Motor neuron (in vitro differentiated cells): ENCODE measurements at regions of chr1 and their contacts with region 1.

Region 1: DNA sequence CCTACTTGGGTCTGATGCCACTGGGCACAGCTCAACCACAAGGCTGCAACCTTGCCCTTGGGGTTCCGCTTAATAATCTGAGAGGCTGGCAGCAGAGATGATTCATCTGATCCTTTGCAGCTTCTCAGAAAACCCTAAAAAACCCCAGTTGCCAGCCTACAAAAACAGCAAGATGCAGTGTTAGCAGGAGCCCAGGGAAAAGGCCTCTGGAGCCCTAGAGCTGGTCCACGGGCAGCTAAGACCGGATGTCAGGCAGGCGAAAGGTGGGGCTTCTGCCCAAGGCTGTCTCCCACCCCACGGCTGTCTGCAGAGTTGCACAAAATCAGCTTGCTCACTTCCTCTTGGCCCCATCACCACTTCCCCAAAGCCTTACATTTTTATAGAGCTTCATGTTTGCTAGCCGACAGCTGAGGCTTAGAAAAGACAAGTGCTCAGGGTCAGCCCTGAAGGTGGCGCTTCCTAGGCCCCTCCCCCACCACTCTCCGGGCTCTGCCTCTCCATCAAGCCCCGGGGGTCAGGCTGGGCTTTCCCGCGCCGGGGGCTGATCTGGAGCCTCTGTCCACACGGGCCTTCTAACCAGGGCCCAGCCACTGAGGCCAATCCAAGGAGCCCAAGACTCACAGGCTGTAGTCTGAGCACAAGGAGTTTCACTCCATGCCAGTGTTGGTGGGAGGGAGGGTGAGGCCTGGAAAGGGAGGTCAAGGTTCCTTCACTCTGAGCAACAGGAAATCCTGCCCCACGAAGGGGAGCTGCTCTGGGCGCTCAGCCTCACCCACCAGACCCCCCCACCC is 4.2 kb upstream of the ADORA3 start:
- ATAC-seq: peak; percentile 71 to 88 (median 84)
- H3K4me3 ChIP-seq: peak overlapping the region; percentile 13 to 26 (median 18)
- H3K27ac ChIP-seq: peak overlapping the region; percentile 24 to 79
- H3K4me1 ChIP-seq: peaks cover 11 to 15% of the 10 kb centered on the region in 2 donors

Region 2: GRCh38 chr1:111656086-111657017 is 148.7 kb after region 1 on chr1:
- in situ Hi-C with region 1: loop called in 3 of 9 experiments (anchors 10 to 25 kb)
- ATAC-seq: peak in 2 of 8 experiments; percentile 25 to 47
- H3K4me3 ChIP-seq: no peak overlapping the region
- H3K27ac ChIP-seq: no peak overlapping the region
- H3K4me1 ChIP-seq: peaks cover 0 to 3% of the 10 kb centered on the region in 2 donors

Region 3: DNA sequence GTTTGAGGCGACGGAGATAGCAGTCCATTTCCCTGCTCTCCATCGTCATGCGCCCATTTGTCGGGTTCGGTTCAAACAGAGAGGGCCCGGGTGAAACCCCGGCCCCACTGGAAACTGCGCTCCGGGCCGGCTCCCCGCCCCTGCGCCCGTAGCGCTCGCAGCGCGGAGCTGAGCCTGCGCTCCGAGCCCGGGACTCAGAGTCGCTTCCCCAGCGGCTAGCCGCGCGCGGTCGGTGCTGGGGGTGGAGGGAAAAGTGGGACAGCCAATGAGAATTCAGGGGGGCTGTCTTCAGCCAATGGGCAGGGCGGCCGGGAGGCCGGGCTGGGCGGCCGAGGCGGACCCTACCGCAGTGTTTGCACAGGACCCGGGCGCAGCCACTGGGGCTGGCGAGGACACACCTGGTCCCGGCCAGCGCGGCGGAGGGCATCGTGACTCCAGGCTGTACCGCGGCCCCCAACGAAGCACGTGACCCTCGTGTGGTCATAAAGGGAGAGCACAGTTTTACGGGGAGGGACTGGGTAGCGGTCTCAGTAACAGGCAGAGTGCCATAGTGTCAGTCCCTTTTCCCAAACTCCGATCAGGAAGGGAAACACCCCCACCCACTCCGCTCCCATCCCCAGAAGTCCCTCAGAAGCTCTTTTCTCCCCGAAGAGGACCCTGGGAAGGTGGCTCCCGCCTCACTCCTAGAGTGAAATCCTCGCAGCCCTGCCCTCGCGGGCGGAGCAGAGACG is 231.8 kb after region 1 on chr1 and contains the start of gene INKA2:
- in situ Hi-C with region 1: loop called in 1 of 9 experiments (anchors 25 kb)
- ATAC-seq: peak; percentile 75 to 91 (median 87)
- H3K4me3 ChIP-seq: peak within 1 kb of the TSS; percentile 46 to 53 (median 46)
- H3K27ac ChIP-seq: peak within 1 kb of the TSS; percentile 78 to 84
- H3K4me1 ChIP-seq: peaks cover 27 to 29% of the 10 kb centered on the region in 2 donors
- total RNA-seq, gene INKA2: 1.3 to 14.3 (median 4.7) TPM

Region 4: DNA sequence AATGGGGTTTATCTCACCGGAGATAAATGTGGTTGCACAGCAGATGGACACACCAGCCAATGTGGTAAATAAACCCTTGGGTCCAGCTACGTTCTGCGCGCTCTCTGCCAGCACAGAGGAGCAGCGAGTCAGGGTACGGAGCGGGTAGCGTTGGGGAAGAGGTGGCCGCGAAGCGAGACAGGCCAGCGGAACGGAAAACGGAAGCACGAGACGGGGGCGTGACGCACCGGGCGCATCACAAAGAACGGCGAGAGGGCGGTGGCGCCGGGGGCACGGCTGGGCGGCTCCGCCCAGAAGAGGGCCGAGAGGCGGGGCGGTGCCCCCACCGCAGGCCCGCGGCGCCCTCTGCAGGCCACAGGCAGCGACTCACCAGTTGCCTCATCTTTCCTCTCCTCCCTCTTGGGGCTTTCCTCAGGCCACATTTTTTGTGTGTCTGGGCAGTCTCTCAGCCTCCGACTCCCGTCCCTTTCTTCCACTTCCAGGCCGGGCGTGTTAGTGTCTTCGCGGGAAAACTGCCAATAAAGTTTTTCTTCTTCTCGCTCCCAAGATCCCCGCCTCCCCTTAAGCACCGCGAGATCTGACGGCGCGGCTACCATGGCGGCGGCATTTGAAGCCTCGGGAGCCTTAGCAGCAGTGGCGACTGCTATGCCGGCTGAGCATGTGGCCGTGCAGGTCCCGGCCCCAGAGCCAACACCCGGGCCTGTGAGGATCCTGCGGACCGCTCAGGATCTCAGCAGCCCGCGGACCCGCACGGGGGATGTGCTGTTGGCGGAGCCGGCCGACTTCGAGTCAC is 247.9 kb after region 1 on chr1 and contains the start of gene DDX20:
- in situ Hi-C with region 1: loop called in 3 of 9 experiments (anchors 25 kb)
- ATAC-seq: peak; percentile 82 to 91 (median 89)
- H3K4me3 ChIP-seq: peak within 1 kb of the TSS; percentile 71 to 95 (median 88)
- H3K27ac ChIP-seq: peak within 1 kb of the TSS; percentile 95 to 96
- H3K4me1 ChIP-seq: peaks cover 15 to 19% of the 10 kb centered on the region in 2 donors
- total RNA-seq, gene DDX20: 8.6 to 26.1 (median 14.9) TPM

Region 5: DNA sequence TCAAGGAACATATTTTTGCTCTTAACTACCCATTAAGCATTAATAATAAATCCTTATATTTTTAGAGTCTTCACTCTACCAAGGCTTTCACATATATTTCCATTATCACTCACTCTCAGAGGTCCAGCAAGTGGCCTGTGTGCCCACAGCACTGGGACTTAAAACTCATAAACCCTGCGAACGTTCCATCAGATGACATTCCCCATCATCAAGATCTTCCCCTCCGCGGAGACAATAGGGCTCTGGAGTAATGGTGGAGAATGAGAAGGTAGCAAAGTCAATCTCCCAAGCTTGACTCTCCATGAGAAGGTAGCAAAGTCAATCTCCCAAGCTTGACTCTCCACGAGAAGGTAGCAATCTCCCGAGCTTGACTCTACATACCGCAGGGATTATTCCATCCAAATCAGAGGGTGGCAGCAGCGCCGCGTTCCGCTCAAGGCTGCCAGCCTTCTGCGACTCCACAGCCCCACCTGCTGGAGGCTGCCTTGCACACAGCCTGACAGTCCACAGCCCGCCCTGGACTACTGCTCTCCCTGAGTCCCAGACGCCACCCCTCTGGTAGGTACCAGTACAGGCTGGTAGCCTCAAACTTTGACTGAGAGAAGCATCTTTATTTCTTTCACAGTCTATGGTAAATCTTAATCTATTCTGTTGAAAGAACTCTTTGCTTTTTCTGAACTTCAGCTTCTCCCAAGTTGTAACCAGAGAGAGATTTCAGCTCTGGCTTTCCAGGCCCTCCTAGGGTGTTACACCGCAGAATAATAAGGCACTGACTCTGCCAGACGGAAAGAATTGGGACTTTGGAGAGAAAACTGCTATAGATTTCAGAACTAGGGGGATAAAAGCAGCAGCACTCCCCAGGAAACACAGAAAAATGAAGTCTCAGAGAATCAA is 862.0 kb after region 1 on chr1:
- in situ Hi-C with region 1: loop called in 2 of 9 experiments (anchors 25 kb)
- ATAC-seq: peak; percentile 100
- H3K4me3 ChIP-seq: no peak overlapping the region
- H3K27ac ChIP-seq: no peak overlapping the region
- H3K4me1 ChIP-seq: no peaks in the 10 kb centered on the region